ENCODE measurements at regions of chr12 and their contacts with region 1.

Region 1: DNA sequence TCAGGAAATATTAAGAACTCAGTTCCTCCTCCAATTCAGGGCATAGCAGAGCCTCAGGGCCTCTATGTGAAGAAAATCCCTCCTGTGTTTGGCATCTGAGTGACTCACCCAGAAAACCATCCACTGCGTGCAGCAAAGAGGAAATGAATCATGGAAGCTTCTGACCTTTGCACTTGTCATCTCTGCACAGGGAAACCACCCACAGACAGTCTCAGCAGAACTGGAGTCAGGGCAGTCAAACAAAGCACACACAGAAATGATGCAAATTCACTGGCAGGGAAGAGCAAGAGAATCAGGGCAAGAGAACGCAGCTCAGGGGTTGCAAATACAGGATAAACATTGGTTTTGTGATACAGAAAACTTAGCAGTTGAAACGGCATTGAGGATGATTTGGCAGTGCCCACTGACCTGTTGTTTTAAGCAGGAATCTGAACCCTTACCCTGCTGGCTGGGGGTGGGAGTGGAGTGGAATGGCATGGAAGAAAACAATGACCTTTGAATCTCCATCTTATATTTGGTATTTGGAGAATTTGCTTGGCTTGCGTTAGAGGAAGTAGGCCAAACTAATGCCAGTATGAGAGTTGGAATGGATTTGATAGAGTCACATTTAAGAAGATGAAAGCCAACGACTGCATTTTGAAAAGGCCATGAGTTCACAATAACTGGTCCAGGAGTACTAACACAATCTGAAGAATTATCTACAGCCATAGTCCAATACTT is 53.5 kb downstream of the PHLDA1 start:
- DNase-seq: peak; percentile 99
- H3K4me3 Mint-ChIP-seq: peak overlapping the region; percentile 19
- H3K27ac Mint-ChIP-seq: peak overlapping the region; percentile 81
- H3K4me1 Mint-ChIP-seq: peaks cover 32% of the 10 kb centered on the region
- H3K27me3 Mint-ChIP-seq: no peaks in the 10 kb centered on the region
- CTCF ChIP-seq: no peak

Region 2: DNA sequence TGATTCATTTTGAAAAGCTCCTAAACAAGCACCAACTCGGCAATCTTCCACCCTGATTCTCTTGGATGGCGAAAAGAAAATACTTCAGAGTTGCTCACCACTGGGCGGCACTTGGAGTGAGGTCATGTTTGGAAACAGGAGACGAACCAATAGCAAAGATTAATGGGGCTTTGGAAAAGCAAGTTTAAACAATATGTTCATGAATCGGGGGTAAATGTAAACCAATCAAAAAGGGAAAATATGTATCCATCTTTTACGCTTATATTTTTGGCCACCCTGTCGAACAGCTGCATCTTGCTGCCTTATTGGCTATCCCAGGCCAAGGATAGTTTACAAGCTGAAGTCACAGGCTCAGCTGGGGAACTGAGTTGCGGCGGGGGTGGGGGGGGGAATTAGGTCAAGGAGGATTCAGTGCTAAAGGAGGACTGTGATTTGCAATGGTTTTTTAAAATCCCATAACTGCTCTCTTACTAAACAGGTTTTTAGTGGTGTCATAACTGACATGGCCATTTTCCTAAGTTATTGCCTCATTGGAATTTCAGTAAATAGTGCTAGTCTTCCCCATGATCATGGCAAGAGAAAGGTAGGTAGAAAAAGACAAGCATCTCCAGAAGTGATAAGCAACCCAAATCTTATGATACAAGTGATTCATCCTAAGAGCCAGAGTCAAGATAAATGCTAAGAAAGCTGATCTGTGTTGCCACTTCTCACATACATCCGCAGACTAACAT is 157.1 kb before region 1 on chr12:
- CTCF ChIA-PET with region 1: no interaction called
- POLR2A ChIA-PET with region 1: no interaction called
- intact Hi-C with region 1: loop called (anchors 1 kb)
- DNase-seq: peak; percentile 84
- H3K4me3 Mint-ChIP-seq: no peak overlapping the region
- H3K27ac Mint-ChIP-seq: no peak overlapping the region
- H3K4me1 Mint-ChIP-seq: peaks cover 17% of the 10 kb centered on the region
- H3K27me3 Mint-ChIP-seq: no peaks in the 10 kb centered on the region
- CTCF ChIP-seq: peak; percentile 21

Region 3: GRCh38 chr12:75862692-75863471 is 115.2 kb before region 1 on chr12:
- CTCF ChIA-PET with region 1: no interaction called
- POLR2A ChIA-PET with region 1: interaction called, 4 read pairs
- intact Hi-C with region 1: loop called (anchors 1 kb)
- DNase-seq: peak; percentile 85
- H3K4me3 Mint-ChIP-seq: no peak overlapping the region
- H3K27ac Mint-ChIP-seq: peak overlapping the region; percentile 83
- H3K4me1 Mint-ChIP-seq: peaks cover 19% of the 10 kb centered on the region
- H3K27me3 Mint-ChIP-seq: no peaks in the 10 kb centered on the region
- CTCF ChIP-seq: no peak

Region 4: GRCh38 chr12:75944097-75944904 is 33.8 kb before region 1 on chr12:
- CTCF ChIA-PET with region 1: no interaction called
- POLR2A ChIA-PET with region 1: interaction called, 4 read pairs
- intact Hi-C with region 1: loop called (anchors 2 kb)
- DNase-seq: peak; percentile 78
- H3K4me3 Mint-ChIP-seq: peak overlapping the region; percentile 12
- H3K27ac Mint-ChIP-seq: peak overlapping the region; percentile 90
- H3K4me1 Mint-ChIP-seq: peaks cover 15% of the 10 kb centered on the region
- H3K27me3 Mint-ChIP-seq: no peaks in the 10 kb centered on the region
- CTCF ChIP-seq: no peak

Region 5: DNA sequence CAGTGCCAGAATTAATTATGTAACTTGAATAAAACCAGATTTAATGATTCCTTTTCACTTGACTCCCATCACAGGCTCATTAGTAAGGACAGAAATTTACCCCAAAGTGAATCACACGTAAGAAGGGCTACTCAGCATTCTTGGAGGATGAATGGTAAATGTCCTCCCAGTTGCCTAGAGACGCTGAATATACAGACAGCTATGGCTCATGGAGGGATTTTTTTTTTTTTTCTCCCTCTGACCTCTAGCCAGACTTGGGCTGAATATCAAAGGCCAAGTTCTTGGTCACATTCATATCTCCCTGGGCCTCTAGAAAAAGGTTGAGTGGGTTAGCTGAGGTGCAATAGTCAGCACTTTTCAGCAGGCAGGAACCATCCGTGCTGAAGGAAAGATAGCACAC is 24.1 kb before region 1 on chr12:
- CTCF ChIA-PET with region 1: no interaction called
- POLR2A ChIA-PET with region 1: interaction called, 10 read pairs
- intact Hi-C with region 1: no loop called
- DNase-seq: peak; percentile 88
- H3K4me3 Mint-ChIP-seq: no peak overlapping the region
- H3K27ac Mint-ChIP-seq: peak overlapping the region; percentile 77
- H3K4me1 Mint-ChIP-seq: peaks cover 14% of the 10 kb centered on the region
- H3K27me3 Mint-ChIP-seq: no peaks in the 10 kb centered on the region
- CTCF ChIP-seq: no peak

Region 6: DNA sequence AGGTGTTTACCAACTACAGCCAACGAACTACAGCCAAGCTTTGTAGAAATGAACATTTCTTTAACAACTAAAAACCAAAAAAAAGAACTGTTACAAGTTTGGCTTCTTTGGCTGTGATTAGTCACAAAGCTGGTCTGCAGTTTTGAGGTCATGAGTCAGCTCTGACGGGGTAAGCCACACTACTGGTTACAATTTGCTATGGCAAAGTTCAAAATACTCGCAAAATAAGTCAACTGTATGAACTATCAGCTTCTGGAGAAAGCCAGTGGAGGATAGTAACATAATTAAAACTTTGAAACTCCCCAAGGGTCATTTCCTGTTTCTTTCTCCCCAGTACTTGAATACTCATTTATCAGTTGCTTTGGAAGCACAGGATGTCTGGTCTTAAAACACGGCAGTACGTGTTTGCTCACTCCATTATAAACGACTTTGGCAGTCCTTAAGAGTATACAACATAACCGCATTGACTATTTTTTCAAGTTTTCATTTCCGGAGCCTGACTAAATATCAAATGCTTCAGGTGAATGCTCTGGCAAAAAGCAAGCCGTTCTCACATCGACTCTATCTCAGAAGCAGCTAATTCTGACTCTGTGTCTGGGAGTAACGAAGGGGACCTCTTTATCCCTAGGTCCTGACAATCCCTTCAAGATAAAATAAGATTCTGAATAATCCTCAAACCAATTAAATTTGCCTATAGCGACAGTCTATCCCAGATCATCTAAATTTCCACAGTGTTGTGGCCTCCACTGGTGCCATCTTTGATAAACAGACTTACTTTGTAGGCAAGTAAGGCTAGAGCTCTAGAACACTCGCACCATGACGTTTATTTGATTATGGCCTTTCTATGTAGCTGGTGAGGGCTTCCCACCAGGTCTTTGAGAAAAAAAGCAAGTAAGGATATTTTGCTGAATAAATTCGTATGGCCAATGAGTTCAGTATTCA is 42.9 kb after region 1 on chr12:
- CTCF ChIA-PET with region 1: interaction called, 3 read pairs
- POLR2A ChIA-PET with region 1: interaction called, 59 read pairs
- intact Hi-C with region 1: loop called (anchors 2 kb)
- DNase-seq: peak; percentile 90
- H3K4me3 Mint-ChIP-seq: peak overlapping the region; percentile 14
- H3K27ac Mint-ChIP-seq: peak overlapping the region; percentile 96
- H3K4me1 Mint-ChIP-seq: peaks cover 35% of the 10 kb centered on the region
- H3K27me3 Mint-ChIP-seq: no peaks in the 10 kb centered on the region
- CTCF ChIP-seq: no peak